HEK293T (cell line): ENCODE measurements at regions of chr9 and their contacts with region 1.

Region 1: DNA sequence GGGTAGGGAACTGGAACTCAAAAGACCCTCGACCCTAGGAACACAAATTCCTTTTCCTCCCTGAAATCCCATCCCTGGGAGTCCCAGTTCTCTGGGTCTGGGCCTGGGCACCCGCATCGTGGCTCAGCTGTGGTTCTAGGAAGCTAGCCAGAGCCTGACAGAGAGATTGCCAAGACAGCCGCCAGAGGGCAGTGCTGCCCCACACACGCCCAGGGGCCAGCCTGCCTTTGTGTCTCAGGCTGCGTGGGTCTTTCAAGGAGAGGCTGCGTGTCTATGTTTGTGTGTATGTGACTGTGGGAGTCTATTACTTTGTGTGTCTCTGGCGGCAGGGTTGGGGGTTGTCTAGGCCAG is 32.0 kb upstream of the TTLL11 start:
- DNase-seq: peak; percentile 82

Region 2: GRCh38 chr9:122099271-122099869 is 25.8 kb before region 1 on chr9:
- CTCF ChIA-PET with region 1: interaction called, 50 read pairs
- POLR2A ChIA-PET with region 1: interaction called, 4 read pairs
- DNase-seq: peak; percentile 81

Region 3: DNA sequence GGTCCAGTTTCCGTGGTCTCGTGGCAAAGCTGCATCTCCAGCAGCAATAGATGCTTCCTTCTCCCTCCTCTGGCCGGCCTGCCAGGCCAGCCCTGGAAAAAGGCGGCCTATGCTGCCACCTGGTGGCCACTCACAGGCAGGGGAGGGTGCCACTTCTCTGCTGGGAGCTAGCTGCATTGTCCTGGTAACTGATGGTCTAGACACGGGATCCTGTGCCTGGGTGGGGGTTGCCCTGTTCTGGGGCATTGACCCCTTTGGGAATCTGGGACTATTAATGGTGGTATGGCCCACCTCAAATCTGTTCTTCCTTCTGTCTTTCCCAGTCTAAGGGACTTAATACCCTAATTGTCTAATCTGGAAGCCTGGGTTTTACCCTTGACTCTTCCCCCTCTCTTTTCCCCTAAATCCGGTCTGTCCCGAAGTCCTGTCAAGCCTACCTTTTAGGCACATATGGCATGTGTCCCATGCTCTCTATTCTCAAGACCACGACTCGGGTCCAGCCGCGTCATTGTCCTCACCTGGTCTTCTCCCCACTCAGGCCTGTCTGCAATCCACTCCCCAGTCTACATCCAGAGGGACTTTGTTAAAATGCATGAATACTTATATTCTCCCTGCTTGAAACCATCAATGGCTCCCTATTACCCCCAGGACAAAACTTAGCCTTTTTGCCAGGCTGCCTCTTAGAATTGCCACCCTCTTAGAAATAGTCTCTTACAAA is 225.7 kb after region 1 on chr9:
- CTCF ChIA-PET with region 1: interaction called, 55 read pairs
- POLR2A ChIA-PET with region 1: no interaction called
- DNase-seq: peak; percentile 86